ENCODE measurements at regions of chr22 and their contacts with region 1.

Region 1: GRCh38 chr22:34111210-34111824 is 191.0 kb upstream of the LARGE1 start:
- DNase-seq: no peak
- H3K4me3 ChIP-seq: no peak overlapping the region
- H3K27ac ChIP-seq: no peak overlapping the region
- H3K4me1 ChIP-seq: no peaks in the 10 kb centered on the region
- H3K27me3 ChIP-seq: no peaks in the 10 kb centered on the region
- CTCF ChIP-seq: peak in 2 of 3 experiments; percentile 56 to 64

Region 2: DNA sequence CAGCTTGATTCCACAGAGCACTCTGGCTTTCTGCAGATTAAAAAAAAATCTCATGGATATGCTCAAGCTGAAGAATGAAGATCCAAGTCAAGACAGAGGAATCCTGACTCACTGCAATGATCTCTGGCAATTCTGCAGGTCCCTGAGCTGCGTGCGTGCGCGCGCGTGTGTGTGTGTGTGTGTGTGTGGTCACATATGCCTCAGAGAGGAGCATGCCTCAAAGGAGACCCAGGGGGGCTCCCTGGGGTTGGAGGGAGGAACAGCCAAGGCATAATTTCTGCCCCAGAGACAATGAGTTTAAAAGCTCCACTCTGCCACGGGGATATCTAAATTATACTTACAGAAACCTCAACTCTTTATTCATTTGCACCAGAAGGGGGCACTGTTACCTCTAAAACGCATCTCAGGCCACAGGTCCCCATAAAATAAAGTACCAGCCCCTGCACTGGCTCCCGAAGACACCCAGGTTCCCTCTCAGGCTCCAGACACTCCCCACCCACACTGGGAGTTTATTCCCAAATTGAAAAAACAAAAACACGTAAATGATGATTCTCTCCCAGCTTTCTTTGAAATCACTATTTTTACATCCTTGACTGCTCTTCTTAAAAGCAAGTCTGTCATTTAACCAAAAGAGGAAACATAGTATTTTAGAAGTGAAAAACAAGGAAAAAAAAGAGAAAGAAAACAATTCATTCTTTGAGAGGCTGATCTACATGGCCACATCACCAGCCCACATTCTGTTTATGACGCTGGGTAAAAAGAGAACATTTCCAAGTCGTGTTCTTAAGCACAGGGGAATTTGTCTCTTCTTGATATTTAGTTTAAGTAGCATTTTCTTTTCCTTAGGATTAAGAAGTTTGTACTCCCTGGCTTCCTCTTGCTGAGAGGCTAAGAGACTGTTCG is 592.0 kb before region 1 on chr22:
- intact Hi-C with region 1: loop called (anchors 2 kb)
- DNase-seq: no peak
- H3K4me3 ChIP-seq: no peak overlapping the region
- H3K27ac ChIP-seq: no peak overlapping the region
- H3K4me1 ChIP-seq: no peaks in the 10 kb centered on the region
- H3K27me3 ChIP-seq: no peaks in the 10 kb centered on the region
- CTCF ChIP-seq: peak; percentile 34 to 72 (median 46)

Region 3: GRCh38 chr22:33597274-33597985 is 513.9 kb before region 1 on chr22:
- intact Hi-C with region 1: loop called (anchors 10 kb)
- DNase-seq: no peak
- H3K4me3 ChIP-seq: no peak overlapping the region
- H3K27ac ChIP-seq: no peak overlapping the region
- H3K4me1 ChIP-seq: no peaks in the 10 kb centered on the region
- H3K27me3 ChIP-seq: no peaks in the 10 kb centered on the region
- CTCF ChIP-seq: no peak

Region 4: GRCh38 chr22:34093646-34094045 is 17.7 kb before region 1 on chr22:
- intact Hi-C with region 1: no loop called
- DNase-seq: no peak
- H3K4me3 ChIP-seq: no peak overlapping the region
- H3K27ac ChIP-seq: no peak overlapping the region
- H3K4me1 ChIP-seq: no peaks in the 10 kb centered on the region
- H3K27me3 ChIP-seq: no peaks in the 10 kb centered on the region
- CTCF ChIP-seq: no peak

Region 5: GRCh38 chr22:34236527-34236926 is 125.2 kb after region 1 on chr22:
- intact Hi-C with region 1: no loop called
- DNase-seq: no peak
- H3K4me3 ChIP-seq: no peak overlapping the region
- H3K27ac ChIP-seq: no peak overlapping the region
- H3K4me1 ChIP-seq: no peaks in the 10 kb centered on the region
- H3K27me3 ChIP-seq: no peaks in the 10 kb centered on the region
- CTCF ChIP-seq: no peak